ENCODE measurements at regions of chr20 and their contacts with region 1.

Region 1: GRCh38 chr20:11204926-11205768 is 531.3 kb upstream of the JAG1 start:
- DNase-seq: peak; percentile 84
- ATAC-seq: peak; percentile 42
- H3K4me3 ChIP-seq: no peak overlapping the region
- H3K27ac ChIP-seq: no peak overlapping the region
- H3K4me1 ChIP-seq: peaks cover 51% of the 10 kb centered on the region
- H3K27me3 ChIP-seq: no peaks in the 10 kb centered on the region
- CTCF ChIP-seq: peak; percentile 96

Region 2: GRCh38 chr20:11117808-11118528 is 87.2 kb before region 1 on chr20:
- CTCF ChIA-PET with region 1: no interaction called
- POLR2A ChIA-PET with region 1: no interaction called
- intact Hi-C with region 1: no loop called
- DNase-seq: peak; percentile 98
- ATAC-seq: peak; percentile 94
- H3K4me3 ChIP-seq: no peak overlapping the region
- H3K27ac ChIP-seq: peak overlapping the region; percentile 89
- H3K4me1 ChIP-seq: peaks cover 29% of the 10 kb centered on the region
- H3K27me3 ChIP-seq: no peaks in the 10 kb centered on the region
- CTCF ChIP-seq: no peak

Region 3: GRCh38 chr20:11140359-11140758 is 64.8 kb before region 1 on chr20:
- CTCF ChIA-PET with region 1: no interaction called
- POLR2A ChIA-PET with region 1: no interaction called
- intact Hi-C with region 1: loop called (anchors 5 kb)
- DNase-seq: peak; percentile 96
- ATAC-seq: peak; percentile 97
- H3K4me3 ChIP-seq: no peak overlapping the region
- H3K27ac ChIP-seq: peak overlapping the region; percentile 66
- H3K4me1 ChIP-seq: peaks cover 17% of the 10 kb centered on the region
- H3K27me3 ChIP-seq: no peaks in the 10 kb centered on the region
- CTCF ChIP-seq: peak; percentile 48; the same call in 1 of the 2 replicates

Region 4: GRCh38 chr20:11153819-11154218 is 51.3 kb before region 1 on chr20:
- CTCF ChIA-PET with region 1: interaction called, 9 read pairs
- POLR2A ChIA-PET with region 1: no interaction called
- intact Hi-C with region 1: loop called (anchors 2 kb)
- DNase-seq: peak; percentile 82
- ATAC-seq: peak; percentile 70
- H3K4me3 ChIP-seq: no peak overlapping the region
- H3K27ac ChIP-seq: peak overlapping the region; percentile 63
- H3K4me1 ChIP-seq: peaks cover 49% of the 10 kb centered on the region
- H3K27me3 ChIP-seq: no peaks in the 10 kb centered on the region
- CTCF ChIP-seq: no peak

Measured in PC-3 (cell line).